ENCODE measurements at regions of chr5 and their contacts with region 1.

Region 1: GRCh38 chr5:169583424-169584204 is at the start of gene SPDL1:
- DNase-seq: peak; percentile 95 to 97
- ATAC-seq: peak; percentile 98
- total RNA-seq, gene SPDL1: 3.8 to 7.1 TPM

Region 2: DNA sequence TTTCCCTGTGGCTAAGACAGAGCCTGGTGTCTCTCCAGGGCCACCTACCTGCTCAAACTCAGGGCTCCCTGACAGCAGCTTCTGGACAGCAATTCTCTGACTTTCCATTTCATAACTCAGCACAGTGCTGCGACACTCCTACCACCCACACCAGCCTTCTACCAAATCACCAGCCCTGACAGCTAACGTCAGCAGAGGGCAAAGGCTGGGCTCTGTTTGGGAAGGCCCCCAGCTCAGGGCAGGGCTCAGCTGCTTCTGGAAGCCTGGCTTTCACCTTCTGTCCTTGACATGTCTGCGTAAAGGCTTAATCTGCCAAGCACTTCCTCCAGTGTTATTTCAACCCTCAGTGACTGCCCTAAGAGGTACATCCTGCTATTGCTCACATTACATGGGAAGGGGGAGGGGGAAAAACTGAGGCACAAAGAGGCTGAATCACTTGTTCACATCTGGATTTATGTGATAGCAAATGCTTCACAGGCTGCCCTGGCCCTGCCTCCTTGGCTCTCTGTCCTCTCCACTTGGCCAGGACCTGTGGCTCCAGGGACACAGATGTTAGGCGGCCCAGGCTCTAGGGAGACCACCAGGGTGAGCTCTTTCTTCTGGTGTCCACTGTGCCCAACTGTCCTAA is 901.9 kb before region 1 on chr5:
- intact Hi-C with region 1: loop called in 1 of 2 experiments (anchors 5 kb)
- DNase-seq: no peak
- ATAC-seq: peak; percentile 57

Region 3: GRCh38 chr5:169650701-169651331 is 67.2 kb after region 1 on chr5:
- intact Hi-C with region 1: no loop called
- DNase-seq: no peak
- ATAC-seq: no peak